Dorsolateral prefrontal cortex (tissue), 120 donors: ENCODE measurements at regions of chr3 and their contacts with region 1.

Region 1: DNA sequence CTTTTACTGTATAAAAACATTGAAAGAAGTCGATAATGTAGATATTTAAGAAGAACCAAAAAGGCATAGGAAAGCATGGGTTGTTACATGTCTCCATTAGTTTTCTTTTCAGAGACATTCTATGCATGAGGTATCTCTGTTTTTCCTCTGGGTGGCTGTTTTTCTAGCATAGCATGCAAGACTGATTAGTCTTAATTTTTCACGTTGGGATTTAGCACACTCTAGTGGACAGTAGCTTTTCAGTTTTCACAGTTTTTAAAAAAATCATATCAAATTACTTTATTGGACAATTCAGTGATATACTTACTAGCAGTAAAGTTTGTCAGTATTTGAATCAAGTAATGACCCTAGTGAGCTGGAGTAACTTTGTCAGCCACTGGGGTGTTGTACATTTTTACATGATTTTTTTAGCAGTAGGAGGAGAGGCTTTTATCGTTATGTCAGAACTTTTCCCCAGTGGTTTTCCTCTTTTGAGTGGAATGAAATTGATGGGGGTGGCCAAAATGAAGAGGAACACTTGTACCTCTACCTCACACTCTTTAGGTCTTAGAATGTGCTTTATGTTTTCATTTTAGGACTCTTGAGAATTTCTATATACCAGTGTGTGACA is 57.2 kb downstream of the SEC22A start:
- DNase-seq: no peak
- H3K4me3 ChIP-seq: no peak overlapping the region
- H3K27ac ChIP-seq: no peak overlapping the region
- H3K27me3 ChIP-seq: no peaks in the 10 kb centered on the region
- CTCF ChIP-seq: peak; percentile 42 to 85 (median 67)

Region 2: DNA sequence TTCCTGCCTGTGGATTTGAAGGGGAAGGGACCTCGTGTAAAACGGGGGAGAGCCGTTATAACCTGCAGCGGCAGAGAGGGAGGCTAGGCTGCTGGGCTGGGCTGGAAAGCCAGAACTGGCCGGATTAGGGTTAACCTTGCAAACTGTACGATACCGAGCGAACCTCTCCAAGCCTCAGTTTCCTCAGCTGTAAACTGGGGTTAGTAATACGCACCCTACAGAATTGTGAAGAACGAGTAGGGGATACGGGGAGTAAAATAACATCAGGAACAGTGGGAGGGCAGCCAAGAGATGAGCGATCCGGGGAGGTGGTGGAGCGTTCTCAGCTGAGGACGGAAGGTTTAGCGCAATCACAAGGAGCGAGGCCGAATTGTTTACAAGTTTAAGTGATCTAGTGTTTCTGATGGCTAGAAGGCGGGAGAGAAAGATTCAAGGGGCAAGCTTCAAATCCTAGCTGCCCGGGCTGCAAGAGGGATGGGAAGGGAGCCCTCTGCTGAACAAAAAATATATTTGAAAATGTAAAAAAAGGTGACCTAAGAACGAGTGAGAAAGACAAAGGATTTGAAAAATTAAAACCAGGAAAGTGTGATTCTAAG is 230.6 kb before region 1 on chr3:
- intact Hi-C with region 1: loop called in 1 of 2 experiments (anchors 10 kb)
- DNase-seq: peak in 8 of 10 donors; percentile 25 to 46 (median 40)
- H3K4me3 ChIP-seq: peak overlapping the region; percentile 48 to 80 (median 69)
- H3K27ac ChIP-seq: peak overlapping the region in 34 of 59 donors; percentile 2 to 77 (median 48)
- H3K27me3 ChIP-seq: peaks cover 0 to 34% (median 0%) of the 10 kb centered on the region in 45 donors
- CTCF ChIP-seq: peak in 55 of 56 donors; percentile 46 to 81 (median 65)